ENCODE measurements at regions of chr1 and their contacts with region 1.

Region 1: DNA sequence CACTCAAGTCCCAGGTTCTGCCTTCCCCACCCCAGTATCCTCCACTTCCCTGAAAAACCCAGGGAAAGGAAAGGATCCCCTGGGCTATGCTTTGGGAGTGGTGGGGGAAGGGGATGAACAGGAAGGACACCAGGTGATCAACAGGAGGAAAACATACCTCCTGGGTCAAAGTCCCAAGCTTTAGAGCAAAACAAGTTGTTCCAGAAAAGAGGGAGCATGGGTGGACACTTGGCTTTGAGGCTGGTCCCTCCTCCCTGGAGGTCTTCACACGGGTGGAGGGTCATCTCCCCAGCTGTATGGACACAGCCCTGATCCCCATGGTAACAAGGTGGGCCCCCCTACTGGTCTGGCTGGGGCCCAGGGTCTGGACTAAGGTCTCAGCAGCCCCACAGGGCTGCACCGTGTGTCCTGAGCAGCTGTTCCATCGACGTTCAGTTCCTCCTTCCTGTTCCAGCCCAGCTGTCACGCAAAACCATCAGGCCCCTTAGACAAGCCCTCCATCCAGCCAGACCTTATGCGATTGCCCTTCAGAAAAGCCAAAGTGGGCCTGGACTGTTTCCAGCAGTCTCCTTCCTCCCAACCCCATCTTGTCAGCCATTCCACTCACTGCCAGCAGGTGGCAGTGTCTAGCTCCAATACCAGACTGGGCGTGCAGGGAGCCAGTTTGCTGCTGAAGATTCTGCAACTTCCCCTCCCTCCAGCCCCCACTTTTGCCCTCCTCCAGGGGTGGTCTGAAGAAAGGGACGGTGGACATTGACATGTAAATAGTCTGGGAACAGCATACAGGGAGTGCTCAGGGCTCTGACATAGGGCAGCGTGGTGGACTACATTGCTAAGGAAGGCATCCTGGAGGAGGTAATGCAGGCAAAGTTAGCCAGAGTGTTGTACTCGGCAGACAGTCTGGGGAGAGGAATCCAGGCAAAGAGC is 2.9 kb upstream of the PDZK1IP1 start:
- DNase-seq: peak; percentile 94
- ATAC-seq: peak; percentile 86
- H3K4me3 Mint-ChIP-seq: peak overlapping the region; percentile 25; the same call in 1 of the 2 replicates
- H3K27ac Mint-ChIP-seq: no peak overlapping the region
- H3K4me1 Mint-ChIP-seq: peaks cover 37% of the 10 kb centered on the region
- H3K27me3 Mint-ChIP-seq: peaks cover 37% of the 10 kb centered on the region
- CTCF ChIP-seq: peak; percentile 91

Region 2: DNA sequence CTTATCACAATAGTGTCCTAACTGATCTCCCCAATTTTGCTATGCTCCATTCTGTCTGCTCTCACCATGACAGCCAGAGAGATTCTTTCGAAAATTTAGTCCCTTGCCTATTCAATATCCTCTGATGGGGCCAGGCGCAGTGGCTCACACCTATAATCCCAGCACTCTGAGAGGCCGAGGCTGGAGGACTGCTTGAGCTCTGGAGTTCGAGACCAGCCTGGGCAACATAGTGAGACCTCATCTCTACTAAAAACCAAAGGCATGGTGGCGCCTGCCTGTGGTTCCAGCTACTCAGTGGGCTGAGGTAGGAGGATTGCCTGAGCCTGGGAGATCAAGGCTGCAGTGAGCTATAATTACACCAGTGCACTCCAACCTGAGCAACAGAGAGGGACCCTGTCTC is 13.2 kb after region 1 on chr1:
- CTCF ChIA-PET with region 1: interaction called, 26 read pairs
- POLR2A ChIA-PET with region 1: no interaction called
- DNase-seq: no peak
- ATAC-seq: no peak
- H3K4me3 Mint-ChIP-seq: no peak overlapping the region
- H3K27ac Mint-ChIP-seq: no peak overlapping the region
- H3K4me1 Mint-ChIP-seq: peaks cover 30% of the 10 kb centered on the region
- H3K27me3 Mint-ChIP-seq: peaks cover 69% of the 10 kb centered on the region
- CTCF ChIP-seq: no peak

Region 3: DNA sequence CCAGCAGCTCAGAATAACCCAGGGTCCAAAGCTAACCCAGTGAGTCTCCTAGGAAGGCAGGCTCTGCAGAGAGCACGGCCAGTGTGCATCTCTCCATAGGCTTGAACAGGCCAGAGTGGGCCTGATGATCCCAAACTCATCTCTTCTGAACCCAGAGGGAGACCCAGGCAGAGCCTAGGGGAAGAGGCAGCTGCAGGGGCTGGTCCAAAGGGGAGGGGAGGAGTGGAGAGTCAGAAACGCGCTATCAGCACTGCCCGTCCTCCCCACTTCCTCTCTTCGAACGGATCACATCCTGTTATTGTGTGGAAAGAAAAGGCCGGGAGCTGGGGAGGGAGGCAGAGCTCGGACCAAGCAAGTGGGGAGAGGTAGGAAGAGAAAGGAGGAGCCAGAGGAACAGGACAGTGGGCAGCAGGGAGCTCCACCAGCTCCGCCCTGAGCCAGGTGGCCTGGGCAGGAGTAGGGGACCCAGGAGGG is 19.1 kb after region 1 on chr1:
- CTCF ChIA-PET with region 1: interaction called, 26 read pairs
- POLR2A ChIA-PET with region 1: no interaction called
- DNase-seq: no peak
- ATAC-seq: peak; percentile 7
- H3K4me3 Mint-ChIP-seq: no peak overlapping the region
- H3K27ac Mint-ChIP-seq: no peak overlapping the region
- H3K4me1 Mint-ChIP-seq: peaks cover 36% of the 10 kb centered on the region
- H3K27me3 Mint-ChIP-seq: peaks cover 49% of the 10 kb centered on the region
- CTCF ChIP-seq: no peak

Region 4: GRCh38 chr1:47225430-47226100 is 32.8 kb after region 1 on chr1:
- CTCF ChIA-PET with region 1: interaction called, 25 read pairs
- POLR2A ChIA-PET with region 1: no interaction called
- DNase-seq: no peak
- ATAC-seq: peak; percentile 6
- H3K4me3 Mint-ChIP-seq: peak overlapping the region; percentile 63
- H3K27ac Mint-ChIP-seq: no peak overlapping the region
- H3K4me1 Mint-ChIP-seq: peaks cover 43% of the 10 kb centered on the region
- H3K27me3 Mint-ChIP-seq: peaks cover 51% of the 10 kb centered on the region
- CTCF ChIP-seq: no peak

Region 5: GRCh38 chr1:47231301-47232186 is 38.8 kb after region 1 on chr1:
- CTCF ChIA-PET with region 1: interaction called, 25 read pairs
- POLR2A ChIA-PET with region 1: no interaction called
- DNase-seq: no peak
- ATAC-seq: peak; percentile 2
- H3K4me3 Mint-ChIP-seq: peak overlapping the region; percentile 69
- H3K27ac Mint-ChIP-seq: no peak overlapping the region
- H3K4me1 Mint-ChIP-seq: peaks cover 65% of the 10 kb centered on the region
- H3K27me3 Mint-ChIP-seq: peaks cover 100% of the 10 kb centered on the region
- CTCF ChIP-seq: no peak

Region 6: DNA sequence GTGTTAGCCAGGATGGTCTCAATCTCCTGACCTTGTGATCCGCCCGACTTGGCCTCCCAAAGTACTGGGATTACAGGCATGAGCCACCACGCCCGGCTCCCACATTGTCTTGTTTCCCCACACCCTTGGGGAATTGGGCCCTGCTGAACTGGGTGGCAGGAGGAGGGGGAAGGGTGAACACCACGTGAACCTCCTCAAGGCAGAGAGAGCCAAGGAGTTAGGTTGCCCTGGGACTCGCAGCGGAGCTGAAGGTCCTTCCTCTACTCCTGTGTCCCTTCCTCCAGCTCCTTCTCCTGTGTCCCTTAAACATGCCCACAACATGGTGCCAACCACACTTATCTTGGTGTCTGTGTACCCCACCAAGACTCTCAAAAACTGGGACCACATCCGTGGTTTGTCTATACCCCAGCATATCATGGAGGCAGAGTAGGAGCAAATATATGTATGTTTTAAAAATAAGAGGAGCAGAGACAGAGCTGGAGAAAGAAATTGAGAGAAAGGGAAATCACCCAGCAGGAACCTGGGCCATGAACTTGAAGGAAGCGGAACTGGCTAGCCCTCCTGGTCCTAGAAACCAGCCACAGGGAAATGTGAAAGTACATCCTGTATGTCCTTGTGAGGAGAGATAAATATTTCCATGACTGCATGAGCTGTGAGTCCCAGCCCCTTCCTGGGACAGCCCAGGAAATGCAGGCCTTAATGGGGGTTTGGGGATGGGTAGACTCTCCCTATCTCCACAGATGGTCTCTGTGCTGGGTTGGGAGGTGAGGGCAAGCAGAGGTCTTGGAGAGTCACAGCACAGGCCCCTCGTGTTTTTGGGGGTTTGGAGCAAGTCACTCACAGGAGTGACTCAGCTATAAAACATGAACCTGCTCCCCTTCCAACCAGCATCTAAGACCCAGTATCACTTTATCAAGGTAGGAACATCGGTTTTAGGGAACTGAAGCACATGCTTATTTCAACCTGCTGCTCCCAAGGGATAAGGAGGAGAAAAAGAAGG is 48.7 kb after region 1 on chr1:
- CTCF ChIA-PET with region 1: interaction called, 23 read pairs
- POLR2A ChIA-PET with region 1: no interaction called
- DNase-seq: no peak
- ATAC-seq: no peak
- H3K4me3 Mint-ChIP-seq: no peak overlapping the region
- H3K27ac Mint-ChIP-seq: no peak overlapping the region
- H3K4me1 Mint-ChIP-seq: peaks cover 12% of the 10 kb centered on the region
- H3K27me3 Mint-ChIP-seq: peaks cover 70% of the 10 kb centered on the region
- CTCF ChIP-seq: no peak

Region 7: GRCh38 chr1:47262787-47263413 is 70.2 kb after region 1 on chr1:
- CTCF ChIA-PET with region 1: interaction called, 39 read pairs
- POLR2A ChIA-PET with region 1: no interaction called
- DNase-seq: peak; percentile 60
- ATAC-seq: peak; percentile 67
- H3K4me3 Mint-ChIP-seq: no peak overlapping the region
- H3K27ac Mint-ChIP-seq: no peak overlapping the region
- H3K4me1 Mint-ChIP-seq: no peaks in the 10 kb centered on the region
- H3K27me3 Mint-ChIP-seq: no peaks in the 10 kb centered on the region
- CTCF ChIP-seq: peak; percentile 60